Activated CD8-positive, alpha-beta T cell treated with anti-CD3 and anti-CD28 coated beads for 36 hours (primary cell): ENCODE measurements at regions of chr9 and their contacts with region 1.

Region 1: DNA sequence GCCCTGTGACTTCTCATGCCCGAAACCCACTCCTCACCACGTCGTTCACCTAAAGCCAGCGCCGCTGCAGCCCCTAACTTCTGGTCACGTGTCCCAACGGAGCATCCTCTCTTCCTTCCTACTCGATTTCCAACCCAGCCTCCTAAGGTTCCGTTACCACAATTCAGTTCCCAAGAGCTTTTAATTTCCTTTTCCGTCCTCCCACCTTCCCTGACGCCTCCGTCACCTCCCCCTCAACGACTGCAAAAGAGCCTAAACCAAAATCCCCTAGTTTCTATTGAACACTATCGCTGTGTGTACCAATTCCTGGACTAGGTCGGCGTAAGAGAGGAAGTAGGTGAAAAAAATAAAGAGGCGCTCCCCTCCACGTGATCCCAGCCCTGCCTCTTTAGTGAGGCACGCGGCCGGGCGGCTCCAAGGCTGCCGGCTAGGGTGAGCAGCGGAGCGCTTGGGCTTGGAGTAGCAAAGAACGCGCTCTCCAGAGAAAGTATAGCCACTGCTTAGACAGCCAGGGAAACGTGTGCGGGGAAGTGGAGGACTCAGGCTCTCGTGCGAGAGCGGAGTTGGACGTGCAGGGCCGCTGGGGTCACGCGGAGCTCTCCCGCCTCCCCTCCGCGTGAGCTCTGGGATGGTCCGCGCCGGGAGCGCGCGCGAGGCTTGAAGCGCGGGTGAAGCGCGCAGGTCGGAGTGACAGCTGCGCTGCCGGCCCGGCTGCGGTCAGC is at the starts of genes CENPP and NOL8:
- DNase-seq: peak; percentile 89
- ATAC-seq: peak; percentile 94
- H3K4me3 Mint-ChIP-seq: peak within 1 kb of the TSS; percentile 99
- H3K27ac Mint-ChIP-seq: peak within 1 kb of the TSS; percentile 98
- H3K4me1 Mint-ChIP-seq: peaks cover 34% of the 10 kb centered on the region
- H3K27me3 Mint-ChIP-seq: no peaks in the 10 kb centered on the region
- CTCF ChIP-seq: no peak
- total RNA-seq, gene CENPP: 22.5 to 28.7 TPM
- total RNA-seq, gene NOL8: 44.1 to 46.5 TPM

Region 2: GRCh38 chr9:92242260-92243136 is 82.9 kb before region 1 on chr9:
- CTCF ChIA-PET with region 1: no interaction called
- POLR2A ChIA-PET with region 1: no interaction called
- intact Hi-C with region 1: no loop called
- DNase-seq: no peak
- ATAC-seq: no peak
- H3K4me3 Mint-ChIP-seq: no peak overlapping the region
- H3K27ac Mint-ChIP-seq: no peak overlapping the region
- H3K4me1 Mint-ChIP-seq: no peaks in the 10 kb centered on the region
- H3K27me3 Mint-ChIP-seq: no peaks in the 10 kb centered on the region
- CTCF ChIP-seq: no peak

Region 3: DNA sequence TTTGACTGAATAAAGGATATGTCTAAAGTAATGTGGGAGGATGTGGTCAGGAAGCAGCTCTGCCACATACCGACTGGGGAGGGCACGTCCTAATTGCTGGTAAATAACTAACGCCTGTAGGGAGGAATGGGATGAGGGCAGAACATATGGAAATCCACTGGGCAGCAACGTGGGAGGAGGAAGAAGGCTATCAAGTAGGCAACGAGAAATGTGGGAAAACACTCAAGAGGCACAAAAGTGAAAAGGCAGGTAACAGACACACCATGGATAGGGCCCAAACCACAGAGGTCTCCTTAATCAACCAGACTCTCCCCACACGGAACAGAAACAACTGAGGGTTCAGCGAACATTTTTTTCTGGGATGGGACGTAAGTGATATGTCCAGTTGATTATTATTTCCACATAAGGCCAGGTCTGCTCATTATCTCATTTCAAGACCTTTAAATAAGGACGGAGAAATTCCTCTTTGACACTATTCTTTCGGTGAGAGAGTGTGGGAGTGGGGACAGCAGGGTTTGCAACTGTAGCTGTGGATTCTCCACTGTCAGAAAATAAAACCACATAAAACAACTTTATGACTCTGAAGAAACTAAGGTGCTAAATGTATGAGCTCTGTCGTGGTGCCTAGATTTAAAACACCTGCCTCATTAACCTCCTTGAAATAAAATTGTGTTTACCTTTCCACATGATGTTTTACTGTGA is 48.9 kb before region 1 on chr9:
- CTCF ChIA-PET with region 1: interaction called, 4 read pairs
- POLR2A ChIA-PET with region 1: interaction called, 10 read pairs
- intact Hi-C with region 1: loop called (anchors 5 kb)
- DNase-seq: no peak
- ATAC-seq: peak; percentile 34
- H3K4me3 Mint-ChIP-seq: no peak overlapping the region
- H3K27ac Mint-ChIP-seq: peak overlapping the region; percentile 66
- H3K4me1 Mint-ChIP-seq: peaks cover 36% of the 10 kb centered on the region
- H3K27me3 Mint-ChIP-seq: no peaks in the 10 kb centered on the region
- CTCF ChIP-seq: no peak

Region 4: GRCh38 chr9:92293452-92294296 is 31.8 kb before region 1 on chr9 and contains the start of gene IARS1:
- CTCF ChIA-PET with region 1: interaction called, 6 read pairs
- POLR2A ChIA-PET with region 1: interaction called, 13 read pairs
- intact Hi-C with region 1: no loop called
- DNase-seq: peak; percentile 100
- ATAC-seq: peak; percentile 89
- H3K4me3 Mint-ChIP-seq: peak within 1 kb of the TSS; percentile 85
- H3K27ac Mint-ChIP-seq: peak within 1 kb of the TSS; percentile 99
- H3K4me1 Mint-ChIP-seq: peaks cover 52% of the 10 kb centered on the region
- H3K27me3 Mint-ChIP-seq: no peaks in the 10 kb centered on the region
- CTCF ChIP-seq: no peak
- total RNA-seq, gene IARS1: 247 to 251 TPM

Region 5: DNA sequence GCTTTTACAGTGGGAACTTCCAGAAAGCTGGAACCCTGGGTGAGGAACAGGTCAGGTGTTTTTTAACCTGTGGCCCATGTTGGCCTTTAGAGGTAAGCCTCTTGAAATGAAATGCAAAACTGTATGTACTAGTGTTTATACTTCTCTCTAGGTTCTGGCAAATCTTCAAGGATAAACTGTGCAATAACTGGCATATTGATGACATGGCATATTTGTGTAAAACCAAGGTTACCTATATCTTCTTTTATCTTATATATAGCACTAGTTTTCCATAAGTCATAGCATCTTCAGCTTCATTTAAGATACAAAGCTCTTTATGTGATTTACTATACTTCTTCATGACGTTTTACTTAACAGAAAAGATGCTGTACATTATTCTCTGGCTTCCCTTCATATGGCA is 24.5 kb before region 1 on chr9:
- CTCF ChIA-PET with region 1: no interaction called
- POLR2A ChIA-PET with region 1: interaction called, 10 read pairs
- intact Hi-C with region 1: no loop called
- DNase-seq: no peak
- ATAC-seq: no peak
- H3K4me3 Mint-ChIP-seq: no peak overlapping the region
- H3K27ac Mint-ChIP-seq: no peak overlapping the region
- H3K4me1 Mint-ChIP-seq: peaks cover 14% of the 10 kb centered on the region
- H3K27me3 Mint-ChIP-seq: no peaks in the 10 kb centered on the region
- CTCF ChIP-seq: no peak

Region 6: DNA sequence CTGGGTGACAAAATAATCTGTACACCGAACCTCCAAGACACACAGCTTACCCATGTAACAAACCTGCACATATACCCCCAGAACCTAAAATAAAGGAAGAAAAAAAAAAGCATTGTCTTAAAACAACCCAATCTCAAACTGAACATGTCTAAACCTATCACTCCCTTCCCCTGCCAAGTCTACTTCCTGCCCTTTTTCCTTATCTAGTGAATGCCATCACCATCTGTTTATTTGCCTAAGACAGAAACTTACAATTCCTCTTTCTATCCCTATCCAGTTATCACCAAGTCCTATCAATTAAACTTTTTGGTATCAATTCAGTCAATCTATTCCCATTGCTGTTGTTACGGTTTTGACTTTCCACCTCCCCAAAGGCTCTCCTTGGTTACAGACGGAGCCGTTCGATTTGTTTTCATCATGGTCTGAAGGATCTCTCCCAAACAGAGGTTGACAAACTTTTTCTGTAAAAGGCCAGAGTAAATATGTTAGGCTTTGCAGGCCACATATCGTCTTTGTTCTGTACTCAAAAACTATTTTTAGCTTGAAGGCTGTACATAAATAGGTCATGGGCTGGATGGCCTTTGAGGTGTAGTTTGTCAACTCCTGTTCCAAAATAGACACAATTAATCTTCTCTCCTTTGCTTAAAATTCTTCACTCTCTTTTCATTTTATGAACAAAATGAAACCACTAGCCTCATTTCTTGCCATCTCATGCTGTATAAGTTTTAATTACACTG is 12.4 kb before region 1 on chr9:
- CTCF ChIA-PET with region 1: no interaction called
- POLR2A ChIA-PET with region 1: interaction called, 12 read pairs
- intact Hi-C with region 1: no loop called
- DNase-seq: no peak
- ATAC-seq: no peak
- H3K4me3 Mint-ChIP-seq: no peak overlapping the region
- H3K27ac Mint-ChIP-seq: peak overlapping the region; percentile 31
- H3K4me1 Mint-ChIP-seq: peaks cover 34% of the 10 kb centered on the region
- H3K27me3 Mint-ChIP-seq: no peaks in the 10 kb centered on the region
- CTCF ChIP-seq: no peak

Region 7: DNA sequence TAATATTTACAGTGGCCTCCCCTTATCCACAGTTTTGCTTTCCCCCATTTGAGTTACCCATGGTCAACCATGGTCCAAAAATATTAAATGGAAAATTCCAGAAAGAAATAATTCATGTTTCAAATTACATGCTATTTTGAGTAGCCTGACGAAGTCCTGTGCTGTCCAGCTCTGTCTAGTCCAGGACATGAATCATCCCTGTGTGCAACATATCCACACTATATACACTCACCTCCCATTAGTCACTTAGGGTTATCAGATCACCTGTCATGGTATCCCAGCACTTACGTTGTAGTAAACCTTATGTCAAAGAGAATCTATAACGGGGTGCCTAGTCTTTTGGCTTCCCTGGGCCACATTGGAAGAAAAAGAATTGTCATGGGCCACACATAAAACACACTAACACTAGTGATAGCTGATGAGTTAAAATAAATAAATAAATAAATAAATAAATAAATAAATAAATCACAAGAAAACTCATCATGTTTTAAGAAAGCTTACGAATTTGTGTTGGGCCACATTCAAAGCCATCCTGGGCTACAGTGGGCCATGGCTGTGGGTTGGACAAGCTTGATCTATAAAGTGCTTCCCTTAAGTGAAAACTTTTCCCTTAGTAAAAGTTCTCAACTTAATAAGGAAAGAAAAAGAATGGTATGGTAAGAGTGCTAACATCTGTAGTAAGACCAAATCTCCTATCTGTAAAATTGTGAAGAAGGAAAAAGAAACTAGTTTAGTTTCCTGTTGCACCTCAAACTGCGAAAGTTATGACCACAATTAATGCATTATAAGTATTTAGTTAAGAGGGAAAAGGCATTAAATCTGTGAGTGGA is 114.7 kb after region 1 on chr9:
- CTCF ChIA-PET with region 1: no interaction called
- POLR2A ChIA-PET with region 1: no interaction called
- intact Hi-C with region 1: loop called (anchors 10 kb)
- DNase-seq: no peak
- ATAC-seq: no peak
- H3K4me3 Mint-ChIP-seq: no peak overlapping the region
- H3K27ac Mint-ChIP-seq: no peak overlapping the region
- H3K4me1 Mint-ChIP-seq: peaks cover 8% of the 10 kb centered on the region
- H3K27me3 Mint-ChIP-seq: no peaks in the 10 kb centered on the region
- CTCF ChIP-seq: no peak

Region 8: DNA sequence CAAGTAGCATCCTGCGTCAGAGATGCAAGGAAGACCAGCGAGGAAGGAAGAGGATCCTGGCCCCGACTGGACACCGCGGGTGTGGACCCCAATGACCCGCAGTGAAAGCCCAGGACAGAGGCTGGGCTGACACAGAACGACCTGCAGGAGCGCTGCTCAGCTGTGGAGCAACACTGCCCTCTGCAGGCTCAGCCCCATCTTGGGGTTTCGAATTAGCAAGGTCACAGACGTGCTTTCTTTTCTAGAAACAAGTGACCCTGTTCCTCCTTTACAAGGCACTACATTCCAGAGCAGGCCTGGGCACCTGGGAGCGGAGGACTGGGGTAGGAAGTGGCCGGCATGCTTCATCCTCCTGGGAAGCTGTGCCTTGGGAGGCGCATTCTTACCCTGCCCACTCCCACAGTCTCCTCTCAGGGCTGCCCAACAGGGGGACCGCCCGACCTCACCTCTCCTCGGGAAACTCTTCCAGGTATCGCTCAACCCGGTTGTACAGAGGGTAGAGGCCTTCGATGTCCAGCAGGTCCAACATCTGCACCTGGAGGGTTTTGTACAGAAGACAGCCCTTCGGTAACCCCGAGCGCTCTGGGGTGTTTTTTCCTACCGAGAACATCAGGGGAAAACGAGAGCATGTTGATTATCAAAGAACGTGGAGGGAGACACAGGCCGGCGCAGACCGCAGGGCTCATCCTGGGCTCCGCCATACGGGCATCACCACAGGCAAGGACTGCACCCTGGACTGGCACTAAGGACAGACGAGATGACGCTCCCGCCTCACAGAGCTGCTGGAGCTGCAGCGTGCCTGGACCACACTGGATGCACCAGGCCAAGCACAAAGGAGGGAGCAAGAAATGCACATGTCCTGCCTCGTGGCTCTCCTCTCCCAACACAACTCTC is 309.5 kb after region 1 on chr9:
- CTCF ChIA-PET with region 1: no interaction called
- POLR2A ChIA-PET with region 1: no interaction called
- intact Hi-C with region 1: loop called (anchors 10 kb)
- DNase-seq: peak; percentile 80
- ATAC-seq: peak; percentile 52
- H3K4me3 Mint-ChIP-seq: no peak overlapping the region
- H3K27ac Mint-ChIP-seq: no peak overlapping the region
- H3K4me1 Mint-ChIP-seq: peaks cover 14% of the 10 kb centered on the region
- H3K27me3 Mint-ChIP-seq: no peaks in the 10 kb centered on the region
- CTCF ChIP-seq: peak; percentile 74

Region 9: GRCh38 chr9:92790542-92791527 is 465.4 kb after region 1 on chr9:
- CTCF ChIA-PET with region 1: no interaction called
- POLR2A ChIA-PET with region 1: no interaction called
- intact Hi-C with region 1: no loop called
- DNase-seq: peak; percentile 88
- ATAC-seq: peak; percentile 95
- H3K4me3 Mint-ChIP-seq: no peak overlapping the region
- H3K27ac Mint-ChIP-seq: no peak overlapping the region
- H3K4me1 Mint-ChIP-seq: peaks cover 6% of the 10 kb centered on the region
- H3K27me3 Mint-ChIP-seq: peaks cover under 1% of the 10 kb centered on the region
- CTCF ChIP-seq: peak; percentile 91